GM12878 (cell line): ENCODE measurements at regions of chr4 and their contacts with region 1.

Region 1: DNA sequence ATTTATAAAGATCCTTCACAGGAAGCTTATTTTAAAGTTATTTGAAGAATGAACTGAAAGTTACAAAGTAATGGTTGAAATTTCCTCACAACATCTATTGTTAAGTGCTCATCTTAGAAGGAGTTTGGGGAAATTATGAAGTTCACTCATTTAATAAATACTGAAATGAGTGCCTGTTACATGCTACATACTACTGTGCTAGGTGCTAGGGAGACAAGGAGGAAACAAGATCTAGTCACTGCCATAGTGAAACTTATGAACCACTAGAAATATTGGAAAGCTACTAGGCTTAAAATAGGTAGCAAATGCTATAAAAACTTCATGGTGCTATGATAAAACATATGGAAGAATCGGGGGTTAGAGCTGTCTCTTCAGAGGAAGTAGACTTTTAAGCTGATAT is 97.1 kb downstream of the JADE1 start:
- DNase-seq: no peak
- ATAC-seq: no peak
- H3K4me3 ChIP-seq: no peak overlapping the region
- H3K27ac ChIP-seq: no peak overlapping the region
- H3K4me1 ChIP-seq: no peaks in the 10 kb centered on the region
- H3K27me3 ChIP-seq: no peaks in the 10 kb centered on the region
- CTCF ChIP-seq: no peak
- EP300 ChIP-seq: no peak
- POLR2A ChIP-seq: no peak
- RAD21 ChIP-seq: no peak

Region 2: DNA sequence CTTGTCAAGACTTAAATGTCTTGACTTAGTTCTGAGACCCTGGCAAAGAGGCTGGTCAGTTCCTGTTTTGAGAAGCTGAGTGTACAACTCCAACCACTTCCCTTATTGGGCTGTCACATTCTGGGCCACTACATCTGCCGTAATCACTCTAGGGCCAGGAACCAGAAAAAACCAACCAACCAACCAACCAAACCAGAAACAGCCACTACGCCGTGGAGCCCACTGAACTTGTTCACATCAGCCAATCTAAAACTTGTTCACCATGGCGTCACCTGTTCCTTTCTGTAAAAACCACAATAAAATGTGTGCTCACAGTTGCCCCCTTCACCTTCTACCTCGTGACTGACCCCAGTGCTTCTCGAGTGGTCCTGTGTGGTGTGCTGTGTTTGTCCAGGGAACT is 10.3 kb after region 1 on chr4:
- CTCF ChIA-PET with region 1: interaction called, 4 read pairs
- POLR2A ChIA-PET with region 1: no interaction called
- RAD21 ChIA-PET with region 1: no interaction called
- SMC1A ChIA-PET with region 1: interaction called, 11 read pairs
- in situ Hi-C with region 1: no loop called
- intact Hi-C with region 1: no loop called
- DNase-seq: peak; percentile 84
- ATAC-seq: peak; percentile 94
- H3K4me3 ChIP-seq: no peak overlapping the region
- H3K27ac ChIP-seq: peak overlapping the region; percentile 86
- H3K4me1 ChIP-seq: peaks cover 35% of the 10 kb centered on the region
- H3K27me3 ChIP-seq: no peaks in the 10 kb centered on the region
- CTCF ChIP-seq: no peak
- EP300 ChIP-seq: peak; percentile 39 to 72; a peak in 3 of 4 replicates
- POLR2A ChIP-seq: no peak; the same call in 1 of the 2 replicates
- RAD21 ChIP-seq: 0 out of 2 replicates have a peak, but pooled peaks have one; percentile 6

Region 3: GRCh38 chr4:128951316-128951715 is 44.7 kb after region 1 on chr4:
- CTCF ChIA-PET with region 1: no interaction called
- POLR2A ChIA-PET with region 1: no interaction called
- RAD21 ChIA-PET with region 1: no interaction called
- SMC1A ChIA-PET with region 1: no interaction called
- in situ Hi-C with region 1: no loop called
- intact Hi-C with region 1: no loop called
- DNase-seq: no peak
- ATAC-seq: no peak
- H3K4me3 ChIP-seq: no peak overlapping the region
- H3K27ac ChIP-seq: no peak overlapping the region
- H3K4me1 ChIP-seq: no peaks in the 10 kb centered on the region
- H3K27me3 ChIP-seq: no peaks in the 10 kb centered on the region
- CTCF ChIP-seq: no peak
- EP300 ChIP-seq: no peak
- POLR2A ChIP-seq: no peak
- RAD21 ChIP-seq: no peak